ENCODE measurements at regions of chr3 and their contacts with region 1.

Region 1: GRCh38 chr3:45881078-45882022 is 5.0 kb upstream of the CCR9 start:
- DNase-seq: peak; percentile 56
- CTCF ChIP-seq: no peak

Region 2: GRCh38 chr3:45864760-45865519 is 16.4 kb before region 1 on chr3:
- CTCF ChIA-PET with region 1: interaction called, 11 read pairs
- POLR2A ChIA-PET with region 1: no interaction called
- DNase-seq: no peak
- CTCF ChIP-seq: no peak

Region 3: DNA sequence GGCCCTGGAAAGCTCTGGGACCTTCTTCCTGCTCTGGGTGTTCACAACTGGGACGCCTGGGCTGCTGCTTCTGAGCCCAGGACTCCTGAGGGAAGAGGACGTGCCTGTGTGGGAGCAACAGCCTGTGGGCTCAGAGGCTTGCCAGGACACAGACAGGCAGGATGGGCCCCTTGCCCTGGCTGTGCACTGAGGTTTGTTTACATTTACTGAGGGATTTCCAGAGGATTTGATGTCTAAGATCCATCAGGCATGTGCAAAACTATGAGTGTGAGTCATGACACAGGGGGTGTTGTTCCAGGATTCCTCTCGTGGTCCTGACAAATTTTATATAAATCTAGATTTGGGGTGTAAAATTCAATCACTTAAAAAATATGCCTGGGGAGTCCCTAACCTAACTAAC is 15.6 kb after region 1 on chr3:
- CTCF ChIA-PET with region 1: interaction called, 24 read pairs
- POLR2A ChIA-PET with region 1: interaction called, 4 read pairs
- DNase-seq: no peak
- CTCF ChIP-seq: no peak